WTC11 (cell line): ENCODE measurements at regions of chr19 and their contacts with region 1.

Region 1: DNA sequence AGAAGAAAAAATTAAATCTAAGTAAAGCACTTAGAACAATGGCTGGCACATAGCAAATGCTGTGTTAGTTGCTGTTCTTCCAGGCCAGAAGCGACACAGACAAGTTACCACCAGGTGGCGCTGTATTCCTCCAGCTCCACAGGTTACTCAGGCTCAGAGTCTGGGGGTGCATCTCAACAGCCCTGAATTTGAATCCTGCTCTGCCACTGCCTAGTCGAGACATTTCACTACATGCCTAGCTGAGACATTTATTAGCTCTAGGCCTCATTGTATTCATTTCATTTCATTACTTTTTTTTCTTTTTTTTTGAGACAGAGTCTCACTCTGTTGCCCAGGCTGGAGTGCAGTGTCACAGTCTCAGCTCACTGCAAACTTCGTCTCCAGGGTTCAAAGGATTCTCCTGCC is 16.4 kb upstream of the CYP2B6 start:
- DNase-seq: peak; percentile 84
- ATAC-seq: peak; percentile 91
- H3K4me3 Mint-ChIP-seq: no peak overlapping the region
- H3K27ac Mint-ChIP-seq: no peak overlapping the region
- H3K4me1 Mint-ChIP-seq: peaks cover 6% of the 10 kb centered on the region
- H3K27me3 Mint-ChIP-seq: peaks cover 26% of the 10 kb centered on the region
- CTCF ChIP-seq: peak; percentile 95

Region 2: DNA sequence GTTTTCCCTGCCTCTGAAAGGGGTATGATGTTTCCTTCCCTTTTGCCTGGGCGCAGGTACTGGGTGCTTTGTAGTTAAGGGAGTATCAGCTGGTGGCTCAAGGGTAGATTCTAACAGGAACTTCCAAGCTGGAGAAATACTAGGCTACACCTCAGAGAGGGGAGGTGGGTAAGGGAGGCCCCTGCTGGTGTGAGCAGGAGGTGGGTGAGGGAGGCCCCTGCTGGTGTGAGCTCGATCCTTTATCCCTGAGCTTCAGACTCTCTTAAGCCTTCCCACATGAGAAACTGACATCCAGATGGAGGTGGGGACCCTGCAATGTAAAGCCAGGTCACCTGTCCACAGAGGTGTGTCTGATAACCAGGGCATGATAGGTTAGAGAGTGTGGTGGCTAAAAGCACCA is 48.6 kb after region 1 on chr19:
- CTCF ChIA-PET with region 1: interaction called, 10 read pairs
- POLR2A ChIA-PET with region 1: no interaction called
- DNase-seq: no peak
- ATAC-seq: peak; percentile 55
- H3K4me3 Mint-ChIP-seq: no peak overlapping the region
- H3K27ac Mint-ChIP-seq: no peak overlapping the region
- H3K4me1 Mint-ChIP-seq: peaks cover 12% of the 10 kb centered on the region
- H3K27me3 Mint-ChIP-seq: peaks cover 37% of the 10 kb centered on the region
- CTCF ChIP-seq: no peak